HEK293 (cell line): ENCODE measurements at regions of chr6 and their contacts with region 1.

Region 1: DNA sequence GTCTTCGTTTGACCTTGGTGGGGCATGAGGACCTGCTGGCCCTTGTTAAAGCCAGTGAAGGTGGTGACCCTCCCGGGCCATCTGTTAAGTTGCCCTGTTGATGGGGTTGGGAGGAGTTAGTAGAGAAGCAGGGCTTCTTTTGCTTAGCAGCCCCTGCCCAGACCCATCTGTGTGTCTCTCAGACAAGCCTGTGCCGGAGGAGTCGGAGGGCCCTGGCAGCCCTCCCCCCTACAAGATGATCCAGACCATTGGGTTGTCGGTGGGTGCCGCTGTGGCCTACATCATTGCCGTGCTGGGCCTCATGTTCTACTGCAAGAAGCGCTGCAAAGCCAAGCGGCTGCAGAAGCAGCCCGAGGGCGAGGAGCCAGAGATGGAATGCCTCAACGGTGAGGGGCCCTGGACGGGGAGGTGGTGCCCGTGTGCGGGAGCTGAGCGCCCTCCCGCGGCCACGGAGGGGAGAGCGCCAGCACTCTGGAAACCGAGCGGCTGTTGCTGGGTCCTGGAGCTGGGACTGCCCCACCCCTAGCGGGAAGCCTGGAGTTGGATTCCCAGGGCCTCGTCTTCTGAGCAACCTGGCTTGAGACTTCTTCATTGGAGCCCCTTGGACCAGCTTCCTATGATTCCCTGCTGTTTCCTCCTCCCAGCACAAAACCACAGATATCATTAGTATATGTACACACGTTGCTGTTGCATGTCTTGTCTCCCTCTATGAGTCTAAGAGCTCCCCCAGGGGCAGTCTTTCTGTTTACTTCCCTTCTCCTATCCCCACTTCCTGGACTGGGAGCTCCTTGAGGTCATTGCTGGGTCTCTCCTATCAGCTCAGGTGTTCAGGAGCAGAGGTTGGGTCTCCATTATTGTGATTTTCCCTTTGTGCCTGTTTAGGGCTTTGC is 27.6 kb upstream of the SRF start:
- H3K4me3 ChIP-seq: no peak overlapping the region
- H3K27ac ChIP-seq: no peak overlapping the region
- H3K4me1 ChIP-seq: no peaks in the 10 kb centered on the region
- CTCF ChIP-seq: peak; percentile 99

Region 2: GRCh38 chr6:42901536-42901957 is 241.9 kb before region 1 on chr6:
- CTCF ChIA-PET with region 1: interaction called, 44 read pairs
- POLR2A ChIA-PET with region 1: no interaction called
- H3K4me3 ChIP-seq: no peak overlapping the region
- H3K27ac ChIP-seq: no peak overlapping the region
- H3K4me1 ChIP-seq: no peaks in the 10 kb centered on the region; the same call in 1 of the 2 replicates
- CTCF ChIP-seq: peak; percentile 85

Region 3: GRCh38 chr6:43005844-43006243 is 137.6 kb before region 1 on chr6:
- CTCF ChIA-PET with region 1: interaction called, 30 read pairs
- POLR2A ChIA-PET with region 1: interaction called, 3 read pairs
- H3K4me3 ChIP-seq: no peak overlapping the region
- H3K27ac ChIP-seq: no peak overlapping the region
- H3K4me1 ChIP-seq: no peaks in the 10 kb centered on the region
- CTCF ChIP-seq: no peak

Region 4: GRCh38 chr6:43053545-43054205 is 89.8 kb before region 1 on chr6 and contains the start of gene CUL7:
- CTCF ChIA-PET with region 1: interaction called, 26 read pairs
- POLR2A ChIA-PET with region 1: interaction called, 13 read pairs
- H3K4me3 ChIP-seq: peak within 1 kb of the TSS; percentile 74
- H3K27ac ChIP-seq: peak within 1 kb of the TSS; percentile 85
- H3K4me1 ChIP-seq: peaks cover 9% of the 10 kb centered on the region
- CTCF ChIP-seq: peak; percentile 77; the same call in 1 of the 2 replicates

Region 5: DNA sequence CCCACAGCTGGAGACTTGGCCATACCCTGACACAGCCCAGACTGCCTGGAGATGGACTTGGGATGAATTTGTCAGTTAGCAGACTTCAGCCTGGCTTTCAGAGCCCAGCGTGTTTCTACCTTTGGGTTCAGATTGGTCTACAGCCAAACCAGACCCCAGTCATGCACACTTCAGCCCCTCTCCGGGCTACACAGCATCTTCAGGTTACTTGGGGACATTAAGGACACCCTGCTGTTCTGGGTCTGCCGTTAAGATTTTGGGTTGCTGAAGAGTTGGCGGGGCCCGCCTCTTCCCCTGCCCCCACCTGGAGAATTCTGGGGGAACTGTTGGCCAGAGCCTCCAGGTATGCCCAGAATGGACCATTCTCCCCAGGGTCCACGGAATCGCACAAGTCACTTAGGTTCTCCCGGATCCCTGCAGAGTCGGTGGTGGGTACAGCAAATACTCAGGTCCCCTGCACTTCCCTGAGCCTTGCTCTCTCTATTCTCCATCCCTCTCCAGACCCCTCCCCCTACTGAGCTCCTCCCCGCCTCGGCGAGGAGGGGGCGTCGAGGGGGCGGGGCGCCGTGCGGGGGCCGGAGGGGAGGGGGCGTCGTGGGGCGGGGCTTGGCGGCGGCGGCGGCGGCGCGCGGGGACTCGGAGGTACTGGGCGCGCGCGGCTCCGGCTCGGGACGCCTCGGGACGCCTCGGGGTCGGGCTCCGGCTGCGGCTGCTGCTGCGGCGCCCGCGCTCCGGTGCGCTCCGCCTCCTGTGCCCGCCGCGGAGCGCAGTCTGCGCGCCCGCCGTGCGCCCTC is 67.6 kb before region 1 on chr6 and contains the start of gene PTK7:
- CTCF ChIA-PET with region 1: interaction called, 83 read pairs
- POLR2A ChIA-PET with region 1: interaction called, 18 read pairs
- H3K4me3 ChIP-seq: peak within 1 kb of the TSS; percentile 88
- H3K27ac ChIP-seq: peak within 1 kb of the TSS; percentile 87
- H3K4me1 ChIP-seq: peaks cover 14% of the 10 kb centered on the region
- CTCF ChIP-seq: no peak

Region 6: GRCh38 chr6:43129434-43130194 is 13.9 kb before region 1 on chr6:
- CTCF ChIA-PET with region 1: interaction called, 16 read pairs
- POLR2A ChIA-PET with region 1: no interaction called
- H3K4me3 ChIP-seq: no peak overlapping the region
- H3K27ac ChIP-seq: no peak overlapping the region
- H3K4me1 ChIP-seq: no peaks in the 10 kb centered on the region
- CTCF ChIP-seq: peak; percentile 71

Region 7: GRCh38 chr6:43216200-43216599 is 72.7 kb after region 1 on chr6:
- CTCF ChIA-PET with region 1: no interaction called
- POLR2A ChIA-PET with region 1: no interaction called
- H3K4me3 ChIP-seq: no peak overlapping the region
- H3K27ac ChIP-seq: no peak overlapping the region
- H3K4me1 ChIP-seq: no peaks in the 10 kb centered on the region
- CTCF ChIP-seq: no peak

Region 8: DNA sequence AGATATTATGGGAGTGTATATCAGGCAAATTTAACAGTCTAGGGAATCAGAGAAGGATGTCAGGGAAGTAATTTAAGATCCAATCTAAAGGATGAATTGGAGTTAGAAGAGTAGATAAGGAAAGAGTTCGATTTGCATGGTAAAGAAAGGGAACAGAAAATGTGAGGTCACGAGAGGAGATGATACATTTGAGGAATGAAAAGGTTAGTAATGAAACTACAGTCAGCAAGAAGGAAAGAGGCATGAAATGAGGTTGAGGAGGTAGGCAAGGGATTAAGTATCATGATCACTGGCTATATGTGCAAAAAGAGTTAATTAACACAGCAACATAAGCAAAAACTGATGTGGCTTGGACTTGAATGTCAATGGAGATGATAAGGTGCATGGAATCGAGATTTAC is 203.5 kb after region 1 on chr6:
- CTCF ChIA-PET with region 1: no interaction called
- POLR2A ChIA-PET with region 1: no interaction called
- H3K4me3 ChIP-seq: no peak overlapping the region
- H3K27ac ChIP-seq: no peak overlapping the region
- H3K4me1 ChIP-seq: no peaks in the 10 kb centered on the region
- CTCF ChIP-seq: no peak

Region 9: GRCh38 chr6:43621429-43622180 is 478.1 kb after region 1 on chr6:
- CTCF ChIA-PET with region 1: no interaction called
- POLR2A ChIA-PET with region 1: no interaction called
- H3K4me3 ChIP-seq: no peak overlapping the region
- H3K27ac ChIP-seq: no peak overlapping the region
- H3K4me1 ChIP-seq: no peaks in the 10 kb centered on the region
- CTCF ChIP-seq: no peak